GM12878 (cell line): ENCODE measurements at regions of chr6 and their contacts with region 1.

Region 1: GRCh38 chr6:130655586-130655985 is 171.6 kb upstream of the SMLR1 start:
- DNase-seq: no peak
- ATAC-seq: no peak
- H3K4me3 ChIP-seq: no peak overlapping the region
- H3K27ac ChIP-seq: no peak overlapping the region
- H3K4me1 ChIP-seq: no peaks in the 10 kb centered on the region
- H3K27me3 ChIP-seq: no peaks in the 10 kb centered on the region
- CTCF ChIP-seq: no peak
- EP300 ChIP-seq: no peak
- POLR2A ChIP-seq: no peak
- RAD21 ChIP-seq: no peak

Region 2: DNA sequence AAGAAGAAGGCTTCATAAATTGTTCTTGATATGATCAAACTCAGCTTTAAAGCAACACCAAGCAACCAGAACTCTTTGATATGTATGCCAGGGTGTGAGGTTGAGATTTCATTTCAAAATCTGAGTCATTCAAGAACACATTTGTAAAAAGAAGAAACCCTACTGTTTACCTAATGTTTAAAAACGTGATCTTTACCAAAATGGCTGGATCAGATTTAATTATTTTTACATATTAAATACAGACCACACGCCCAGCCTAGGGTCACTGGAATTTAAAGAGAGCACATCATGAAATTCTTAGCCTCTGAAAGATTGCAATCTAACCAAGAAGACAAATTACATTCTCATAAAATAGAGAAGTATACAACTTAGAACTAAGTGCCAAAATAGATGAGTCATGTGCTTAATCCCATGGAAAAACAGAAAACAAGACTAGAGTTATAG is 35.2 kb before region 1 on chr6:
- CTCF ChIA-PET with region 1: no interaction called
- POLR2A ChIA-PET with region 1: no interaction called
- RAD21 ChIA-PET with region 1: no interaction called
- SMC1A ChIA-PET with region 1: no interaction called
- in situ Hi-C with region 1: no loop called
- intact Hi-C with region 1: no loop called
- DNase-seq: no peak
- ATAC-seq: peak; percentile 47
- H3K4me3 ChIP-seq: no peak overlapping the region
- H3K27ac ChIP-seq: no peak overlapping the region
- H3K4me1 ChIP-seq: peaks cover 3% of the 10 kb centered on the region; the same call in 1 of the 2 replicates
- H3K27me3 ChIP-seq: no peaks in the 10 kb centered on the region
- CTCF ChIP-seq: no peak
- EP300 ChIP-seq: no peak
- POLR2A ChIP-seq: no peak
- RAD21 ChIP-seq: no peak

Region 3: DNA sequence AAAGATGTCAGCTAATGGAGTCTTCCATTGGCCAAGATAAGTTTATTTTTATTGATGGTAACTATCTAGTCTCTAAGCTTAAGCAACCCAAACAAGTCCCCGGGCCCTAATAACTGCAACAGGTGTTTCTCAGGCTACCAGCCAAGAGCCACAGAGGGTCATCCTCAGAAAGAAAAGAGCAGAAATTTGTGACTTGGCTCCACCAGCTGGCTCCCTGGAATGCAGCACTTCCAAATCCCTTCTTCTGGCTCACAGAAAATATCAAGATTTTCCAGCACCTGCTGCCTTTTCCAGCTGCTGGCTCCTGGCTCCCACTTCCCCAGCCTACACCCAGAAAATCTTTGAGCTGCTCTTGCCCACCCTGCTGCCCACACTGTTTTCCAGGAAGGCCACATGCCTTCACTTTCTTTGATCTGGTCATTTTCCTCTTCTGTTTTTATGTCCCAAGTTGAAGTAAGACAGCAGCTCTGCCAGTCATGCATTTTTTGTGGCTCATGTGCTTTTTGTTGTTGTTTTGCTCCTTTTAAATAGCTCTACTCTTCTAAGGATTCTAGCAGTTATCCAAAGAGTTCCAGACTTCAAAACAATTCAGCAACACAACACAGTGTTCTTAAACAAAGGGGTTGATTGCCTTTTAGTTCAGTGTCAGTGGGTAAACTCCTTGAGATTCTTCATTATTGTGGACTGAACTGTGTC is 20.6 kb after region 1 on chr6:
- CTCF ChIA-PET with region 1: interaction called, 3 read pairs
- POLR2A ChIA-PET with region 1: no interaction called
- RAD21 ChIA-PET with region 1: no interaction called
- SMC1A ChIA-PET with region 1: interaction called, 10 read pairs
- in situ Hi-C with region 1: no loop called
- intact Hi-C with region 1: no loop called
- DNase-seq: no peak
- ATAC-seq: no peak; the same call in 2 of the 3 replicates
- H3K4me3 ChIP-seq: no peak overlapping the region
- H3K27ac ChIP-seq: no peak overlapping the region
- H3K4me1 ChIP-seq: no peaks in the 10 kb centered on the region; the same call in 1 of the 2 replicates
- H3K27me3 ChIP-seq: no peaks in the 10 kb centered on the region
- CTCF ChIP-seq: peak in 1 of 3 experiments; percentile 31; a peak in 2 of 6 replicates
- EP300 ChIP-seq: no peak
- POLR2A ChIP-seq: no peak
- RAD21 ChIP-seq: peak; percentile 40; the same call in 1 of the 2 replicates

Region 4: DNA sequence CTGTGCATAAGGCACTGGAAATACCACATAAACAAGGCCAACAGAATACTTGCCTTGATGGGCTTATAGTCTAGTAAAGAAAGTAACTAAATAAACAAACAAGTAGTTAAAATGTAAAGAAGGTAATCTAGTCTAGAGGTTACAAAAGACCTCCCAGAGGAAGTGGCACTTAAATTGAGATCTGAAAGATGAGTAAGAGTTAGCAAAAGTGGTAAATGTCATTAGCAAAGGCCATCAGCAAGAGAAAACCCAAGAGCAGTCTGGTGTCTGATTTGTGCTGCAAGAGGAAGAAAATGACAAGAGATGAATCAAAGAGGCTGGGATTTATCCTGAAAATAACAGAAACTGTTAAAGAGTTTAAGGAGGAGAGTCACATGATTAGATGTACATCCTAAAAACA is 75.0 kb after region 1 on chr6:
- CTCF ChIA-PET with region 1: no interaction called
- POLR2A ChIA-PET with region 1: no interaction called
- RAD21 ChIA-PET with region 1: no interaction called
- SMC1A ChIA-PET with region 1: no interaction called
- in situ Hi-C with region 1: no loop called
- intact Hi-C with region 1: no loop called
- DNase-seq: no peak
- ATAC-seq: 0 out of 3 replicates have a peak, but pooled peaks have one; percentile 27
- H3K4me3 ChIP-seq: no peak overlapping the region
- H3K27ac ChIP-seq: no peak overlapping the region
- H3K4me1 ChIP-seq: no peaks in the 10 kb centered on the region
- H3K27me3 ChIP-seq: no peaks in the 10 kb centered on the region
- CTCF ChIP-seq: no peak
- EP300 ChIP-seq: no peak
- POLR2A ChIP-seq: no peak
- RAD21 ChIP-seq: no peak